Calu3 (cell line): ENCODE measurements at regions of chr6 and their contacts with region 1.

Region 1: GRCh38 chr6:28252009-28252975 is at the start of gene ZKSCAN4:
- DNase-seq: peak; percentile 84
- H3K4me3 Mint-ChIP-seq: peak within 1 kb of the TSS; percentile 100
- H3K27ac Mint-ChIP-seq: peak within 1 kb of the TSS; percentile 64
- H3K4me1 Mint-ChIP-seq: peaks cover 10% of the 10 kb centered on the region
- H3K27me3 Mint-ChIP-seq: no peaks in the 10 kb centered on the region
- CTCF ChIP-seq: no peak
- total RNA-seq, gene ZKSCAN4: 6.1 and 6.7 TPM in 2 replicates

Region 2: DNA sequence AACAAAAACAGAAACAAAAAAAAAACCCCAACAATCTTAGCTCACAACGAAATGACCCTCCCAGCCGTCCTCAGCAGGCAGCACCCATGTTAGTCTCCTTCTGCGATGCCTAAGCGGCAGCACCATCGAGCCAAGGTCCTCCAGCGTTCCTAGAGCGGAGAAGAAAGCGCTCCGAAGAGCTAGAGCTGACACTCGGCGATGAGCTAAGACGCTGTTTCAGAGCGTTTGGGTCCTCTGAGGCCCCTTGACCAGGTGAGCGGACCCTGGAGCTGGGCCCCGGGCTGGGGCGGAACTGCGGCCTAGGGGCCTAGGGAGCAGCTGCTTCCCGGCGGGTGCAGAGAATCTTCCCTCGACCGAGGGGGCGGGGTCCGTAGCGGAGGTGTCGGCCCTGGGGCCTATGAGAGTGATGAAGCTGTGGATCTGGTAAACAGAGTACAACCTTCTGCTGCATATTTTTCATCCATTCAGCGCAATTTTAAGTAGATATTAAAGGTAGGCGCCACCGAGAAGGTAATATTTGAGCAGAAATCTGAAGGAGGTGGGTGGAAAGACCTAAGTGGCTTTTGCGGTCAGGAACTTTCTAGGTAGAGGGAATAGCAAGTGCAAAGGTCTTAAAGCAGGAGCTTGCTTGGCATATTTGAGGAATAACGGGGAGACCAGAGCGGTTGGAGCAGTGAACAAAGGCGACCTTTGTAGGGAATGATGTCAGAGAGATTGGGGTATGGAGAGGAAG is 14.8 kb after region 1 on chr6 and contains the start of gene ZSCAN26:
- CTCF ChIA-PET with region 1: interaction called, 22 read pairs
- intact Hi-C with region 1: loop called (anchors 1 kb)
- DNase-seq: peak; percentile 89
- H3K4me3 Mint-ChIP-seq: no peak within 1 kb of the TSS
- H3K27ac Mint-ChIP-seq: no peak within 1 kb of the TSS
- H3K4me1 Mint-ChIP-seq: no peaks in the 10 kb centered on the region
- H3K27me3 Mint-ChIP-seq: no peaks in the 10 kb centered on the region
- CTCF ChIP-seq: no peak
- total RNA-seq, gene ZSCAN26: 13.1 and 14.2 TPM in 2 replicates

Region 3: DNA sequence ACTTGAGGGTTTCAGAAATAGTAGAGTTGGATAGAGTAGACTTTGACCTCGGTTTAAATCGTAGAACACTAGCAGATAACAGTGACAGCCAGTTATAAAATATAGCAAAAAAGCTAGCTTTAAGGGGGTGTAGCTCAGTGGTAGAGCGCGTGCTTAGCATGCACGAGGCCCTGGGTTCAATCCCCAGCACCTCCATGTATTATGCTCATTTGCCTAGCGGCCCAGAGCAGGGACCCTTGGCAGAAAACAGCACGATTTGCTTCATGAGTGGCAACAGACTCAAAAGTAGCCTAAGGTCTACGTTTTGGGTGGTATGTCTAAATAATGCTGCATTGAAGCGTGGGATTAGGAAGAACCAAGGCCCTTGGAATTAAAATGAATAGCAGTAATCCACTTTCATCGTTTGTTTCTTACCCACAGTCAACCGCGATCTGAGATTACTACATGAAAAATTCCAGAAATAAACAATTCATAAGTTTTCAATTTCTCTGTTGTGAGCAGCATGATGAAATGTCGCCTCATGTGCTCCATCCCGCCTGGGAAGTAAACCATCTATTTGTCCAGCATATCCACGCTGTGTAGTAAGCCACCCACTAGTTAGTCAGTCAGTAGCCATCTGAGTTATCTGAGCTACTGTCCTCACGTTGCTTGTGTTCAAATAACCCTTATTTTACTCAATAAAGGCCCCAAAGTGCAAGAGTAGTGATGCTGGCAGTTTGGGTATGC is 458.3 kb after region 1 on chr6:
- CTCF ChIA-PET with region 1: no interaction called
- intact Hi-C with region 1: no loop called
- DNase-seq: no peak
- H3K4me3 Mint-ChIP-seq: no peak overlapping the region
- H3K27ac Mint-ChIP-seq: no peak overlapping the region
- H3K4me1 Mint-ChIP-seq: no peaks in the 10 kb centered on the region
- H3K27me3 Mint-ChIP-seq: no peaks in the 10 kb centered on the region
- CTCF ChIP-seq: no peak